ENCODE measurements at regions of chr17 and their contacts with region 1.

Region 1: GRCh38 chr17:41665566-41666236 is 23.0 kb upstream of the EIF1 start:
- DNase-seq: peak; percentile 90
- ATAC-seq: peak; percentile 82
- H3K4me3 Mint-ChIP-seq: peak overlapping the region; percentile 85
- H3K27ac Mint-ChIP-seq: peak overlapping the region; percentile 94
- H3K4me1 Mint-ChIP-seq: peaks cover 16% of the 10 kb centered on the region
- H3K27me3 Mint-ChIP-seq: peaks cover 17% of the 10 kb centered on the region
- CTCF ChIP-seq: peak; percentile 71

Region 2: DNA sequence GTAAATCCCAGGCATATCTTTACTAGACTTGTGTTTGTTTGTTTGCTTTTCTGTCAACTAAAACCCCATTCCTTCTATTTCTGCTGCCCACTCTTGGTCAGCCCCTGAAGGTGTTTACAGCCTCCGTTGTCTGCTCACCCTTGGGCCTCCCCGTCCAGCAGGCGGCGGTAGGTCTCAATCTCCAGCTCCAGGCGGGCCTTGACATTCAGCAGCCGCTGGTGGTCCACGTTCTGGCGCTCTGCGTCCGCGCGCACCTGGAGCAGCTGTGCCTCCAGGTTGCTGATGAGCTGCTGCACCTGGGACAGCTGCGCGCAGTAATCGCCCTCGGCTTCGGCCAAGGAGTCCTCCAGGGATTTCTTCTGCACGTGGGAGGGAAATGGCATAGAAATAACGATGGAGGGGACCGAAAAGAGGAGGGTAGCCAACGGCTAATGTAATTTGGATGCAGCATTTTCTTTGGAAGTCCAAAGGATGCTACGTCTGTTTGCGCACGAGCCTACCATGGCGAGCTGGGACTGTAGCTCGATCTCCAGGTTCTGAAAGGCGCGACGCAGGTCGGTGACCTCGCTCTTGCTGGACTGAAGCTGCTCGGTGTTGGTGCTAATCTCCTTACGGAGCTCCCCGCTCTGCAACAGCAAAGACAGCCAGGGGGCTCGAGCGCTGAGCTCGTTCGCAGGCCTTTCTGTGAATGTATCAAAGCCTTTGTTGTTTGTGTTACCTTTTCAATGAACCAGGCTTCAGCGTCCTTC is 802.5 kb before region 1 on chr17:
- CTCF ChIA-PET with region 1: interaction called, 14 read pairs
- POLR2A ChIA-PET with region 1: no interaction called
- DNase-seq: peak; percentile 93
- ATAC-seq: peak; percentile 99
- H3K4me3 Mint-ChIP-seq: peak overlapping the region; percentile 40; the same call in 1 of the 2 replicates
- H3K27ac Mint-ChIP-seq: no peak overlapping the region
- H3K4me1 Mint-ChIP-seq: peaks cover 6% of the 10 kb centered on the region
- H3K27me3 Mint-ChIP-seq: peaks cover 7% of the 10 kb centered on the region
- CTCF ChIP-seq: peak; percentile 68

Region 3: DNA sequence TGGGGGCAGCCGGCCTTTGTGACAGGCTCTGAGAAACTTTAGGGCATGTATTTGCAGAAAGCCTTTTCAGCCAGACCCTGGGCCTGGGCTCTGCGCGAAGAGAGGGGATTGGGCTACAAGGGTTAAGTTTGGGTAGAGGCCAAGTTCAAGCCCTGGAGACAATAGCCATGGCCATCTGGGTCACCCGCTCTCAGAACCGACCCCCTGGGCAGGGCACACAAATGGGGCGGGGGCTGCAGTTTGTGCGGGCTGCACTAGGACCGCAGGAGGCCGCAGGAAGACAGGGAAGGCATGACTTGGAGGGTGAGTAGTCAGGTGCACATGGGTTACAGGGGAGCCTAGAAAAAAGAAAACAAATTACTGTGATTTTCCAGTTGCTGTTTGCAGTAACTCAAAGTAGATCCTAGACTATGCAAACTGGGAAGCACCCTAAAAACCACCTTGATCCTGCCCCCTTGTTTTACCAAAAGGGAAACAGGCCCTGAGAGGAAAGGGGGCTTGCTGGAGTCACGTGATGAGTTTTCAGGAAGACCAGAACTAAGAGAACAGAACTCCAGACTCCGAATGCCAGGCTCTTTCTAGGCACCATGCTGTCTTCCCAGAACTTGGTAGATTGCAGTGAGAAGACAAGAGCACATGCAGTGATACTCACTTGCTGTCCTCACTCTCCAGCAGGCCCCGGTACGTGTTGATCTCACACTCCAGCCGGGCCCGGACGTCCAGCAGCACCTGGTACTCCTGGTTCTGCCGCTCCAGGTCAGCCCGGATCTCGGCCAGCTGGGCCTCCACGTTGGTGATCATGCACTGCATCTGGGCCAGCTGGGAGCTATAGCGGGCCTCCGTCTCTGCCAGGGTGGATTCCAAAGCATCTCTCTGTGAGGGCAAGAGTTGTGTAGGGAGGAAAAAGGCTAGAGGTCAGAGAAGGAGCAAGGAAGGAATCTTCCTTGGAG is 188.6 kb before region 1 on chr17:
- CTCF ChIA-PET with region 1: no interaction called
- POLR2A ChIA-PET with region 1: no interaction called
- DNase-seq: no peak
- ATAC-seq: no peak
- H3K4me3 Mint-ChIP-seq: no peak overlapping the region
- H3K27ac Mint-ChIP-seq: no peak overlapping the region
- H3K4me1 Mint-ChIP-seq: no peaks in the 10 kb centered on the region
- H3K27me3 Mint-ChIP-seq: no peaks in the 10 kb centered on the region
- CTCF ChIP-seq: no peak

Region 4: DNA sequence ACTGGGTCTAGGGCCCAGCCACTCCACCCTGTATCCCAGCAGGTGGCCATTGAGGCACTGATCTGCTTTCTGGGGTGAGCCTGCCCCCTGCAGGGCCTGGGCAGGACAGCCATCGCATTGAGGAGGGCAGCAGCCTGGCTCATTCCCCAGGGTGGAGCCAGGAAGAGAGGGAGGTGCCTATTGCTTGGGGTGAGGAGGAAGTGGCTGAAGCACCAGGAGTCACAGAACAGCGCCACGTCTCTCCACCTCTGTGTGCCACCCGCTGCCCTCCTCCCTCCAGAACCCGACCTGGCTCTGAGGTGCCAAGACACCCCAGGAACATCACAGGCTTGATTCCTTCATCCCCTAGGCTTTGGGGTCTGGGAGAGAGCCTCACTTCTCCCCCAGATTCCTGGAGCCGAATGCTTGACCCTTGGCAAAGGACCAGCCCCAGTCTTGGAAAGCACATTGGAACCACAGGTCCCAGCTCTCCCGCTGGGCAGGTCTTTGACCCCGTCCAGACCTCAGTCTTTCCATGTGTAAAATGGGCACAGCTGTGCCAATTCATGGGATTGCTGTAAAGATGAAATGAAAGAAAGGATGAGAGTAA is 168.8 kb before region 1 on chr17:
- CTCF ChIA-PET with region 1: interaction called, 12 read pairs
- POLR2A ChIA-PET with region 1: no interaction called
- DNase-seq: peak; percentile 81
- ATAC-seq: peak; percentile 94
- H3K4me3 Mint-ChIP-seq: no peak overlapping the region
- H3K27ac Mint-ChIP-seq: no peak overlapping the region
- H3K4me1 Mint-ChIP-seq: peaks cover 37% of the 10 kb centered on the region
- H3K27me3 Mint-ChIP-seq: peaks cover 2% of the 10 kb centered on the region; the same call in 1 of the 2 replicates
- CTCF ChIP-seq: peak; percentile 46; the same call in 1 of the 2 replicates

Region 5: GRCh38 chr17:41559548-41559947 is 106.2 kb before region 1 on chr17:
- CTCF ChIA-PET with region 1: interaction called, 380 read pairs
- POLR2A ChIA-PET with region 1: interaction called, 9 read pairs
- DNase-seq: no peak
- ATAC-seq: no peak
- H3K4me3 Mint-ChIP-seq: no peak overlapping the region
- H3K27ac Mint-ChIP-seq: no peak overlapping the region
- H3K4me1 Mint-ChIP-seq: peaks cover under 1% of the 10 kb centered on the region; the same call in 1 of the 2 replicates
- H3K27me3 Mint-ChIP-seq: no peaks in the 10 kb centered on the region; the same call in 1 of the 2 replicates
- CTCF ChIP-seq: no peak

Region 6: GRCh38 chr17:41602524-41602923 is 63.2 kb before region 1 on chr17:
- CTCF ChIA-PET with region 1: interaction called, 15 read pairs
- POLR2A ChIA-PET with region 1: no interaction called
- DNase-seq: no peak
- ATAC-seq: no peak
- H3K4me3 Mint-ChIP-seq: no peak overlapping the region
- H3K27ac Mint-ChIP-seq: no peak overlapping the region
- H3K4me1 Mint-ChIP-seq: 0 out of 2 replicates have a peak, but pooled peaks cover 3% of the 10 kb centered on the region
- H3K27me3 Mint-ChIP-seq: peaks cover 8% of the 10 kb centered on the region; the same call in 1 of the 2 replicates
- CTCF ChIP-seq: no peak

Region 7: DNA sequence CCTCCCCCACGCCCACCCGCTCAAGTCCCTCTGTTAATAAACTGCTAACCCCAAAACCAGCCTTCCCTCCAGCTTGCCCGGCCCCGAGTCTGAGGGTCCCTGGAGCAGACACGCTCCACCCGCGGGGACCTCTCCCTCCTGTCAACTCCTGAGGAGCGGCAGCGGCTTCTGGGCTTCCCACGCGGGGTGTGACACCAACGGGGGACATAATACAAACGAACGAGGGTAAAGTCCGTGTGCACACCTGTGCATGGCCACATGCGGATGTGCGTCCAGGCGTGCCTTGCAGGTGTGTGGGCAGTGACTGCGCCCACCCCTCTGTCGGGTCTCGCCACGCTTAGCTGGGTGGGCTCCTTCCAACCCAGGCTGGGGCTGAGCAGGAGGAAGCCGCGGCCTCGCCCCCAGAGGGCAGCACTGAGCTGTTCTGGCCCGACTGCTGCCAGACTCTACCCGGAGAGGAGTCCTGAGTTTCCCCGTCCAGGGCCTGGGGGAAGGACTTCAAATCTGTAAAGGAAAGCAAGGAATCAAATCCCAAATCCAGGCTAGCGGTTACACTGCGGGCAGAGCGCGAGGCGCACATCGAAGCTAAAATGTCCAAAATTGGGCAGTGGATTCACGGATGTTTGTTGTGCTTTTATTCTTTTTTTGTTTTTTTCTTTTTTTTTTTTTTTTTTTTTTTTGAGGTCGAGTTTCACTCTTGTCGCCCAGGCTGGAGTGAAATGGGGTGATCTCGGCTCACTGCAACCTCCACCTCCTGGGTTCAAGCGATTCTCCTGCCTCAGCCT is 17.1 kb before region 1 on chr17:
- CTCF ChIA-PET with region 1: interaction called, 374 read pairs
- POLR2A ChIA-PET with region 1: interaction called, 9 read pairs
- DNase-seq: peak; percentile 94
- ATAC-seq: peak; percentile 81
- H3K4me3 Mint-ChIP-seq: peak overlapping the region; percentile 71
- H3K27ac Mint-ChIP-seq: no peak overlapping the region
- H3K4me1 Mint-ChIP-seq: peaks cover 2% of the 10 kb centered on the region
- H3K27me3 Mint-ChIP-seq: no peaks in the 10 kb centered on the region
- CTCF ChIP-seq: peak; percentile 90

Region 8: GRCh38 chr17:41717408-41718286 is 51.9 kb after region 1 on chr17:
- CTCF ChIA-PET with region 1: no interaction called
- POLR2A ChIA-PET with region 1: no interaction called
- DNase-seq: no peak
- ATAC-seq: no peak
- H3K4me3 Mint-ChIP-seq: no peak overlapping the region
- H3K27ac Mint-ChIP-seq: no peak overlapping the region
- H3K4me1 Mint-ChIP-seq: no peaks in the 10 kb centered on the region
- H3K27me3 Mint-ChIP-seq: peaks cover 69% of the 10 kb centered on the region
- CTCF ChIP-seq: no peak

Region 9: DNA sequence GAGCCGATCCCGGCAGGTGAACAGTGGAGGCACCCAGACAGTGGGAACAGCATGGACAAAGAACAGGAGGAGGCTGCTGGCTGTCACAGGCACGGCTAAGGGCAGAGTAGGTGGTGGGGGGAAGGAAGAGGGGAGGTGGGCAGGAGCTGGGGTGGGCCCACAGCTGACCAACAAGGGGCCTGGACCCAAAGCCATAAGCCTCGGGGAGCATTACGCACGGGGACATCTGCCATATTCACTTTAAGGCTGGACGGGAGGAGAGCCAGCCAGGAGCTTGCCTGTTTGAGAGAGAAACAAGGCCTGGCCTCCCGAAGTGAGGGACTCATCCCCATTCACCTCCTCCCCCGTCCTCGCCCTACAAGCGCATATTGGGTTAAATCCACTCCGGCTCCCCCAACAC is 88.4 kb after region 1 on chr17:
- CTCF ChIA-PET with region 1: no interaction called
- POLR2A ChIA-PET with region 1: no interaction called
- DNase-seq: no peak
- ATAC-seq: no peak
- H3K4me3 Mint-ChIP-seq: no peak overlapping the region
- H3K27ac Mint-ChIP-seq: no peak overlapping the region
- H3K4me1 Mint-ChIP-seq: no peaks in the 10 kb centered on the region
- H3K27me3 Mint-ChIP-seq: no peaks in the 10 kb centered on the region; the same call in 1 of the 2 replicates
- CTCF ChIP-seq: no peak

Measured in WTC11 (cell line).